ENCODE measurements at regions of chr9 and their contacts with region 1.

Region 1: GRCh38 chr9:114906908-114907571 is 23.4 kb downstream of the TNFSF8 start:
- DNase-seq: no peak
- H3K4me3 ChIP-seq: no peak overlapping the region
- H3K4me3 Mint-ChIP-seq: peak overlapping the region in 7 of 8 donors; percentile 26 to 85 (median 75)
- H3K27ac ChIP-seq: peak overlapping the region; percentile 44
- H3K27ac Mint-ChIP-seq: peak overlapping the region in 6 of 7 donors; percentile 88 to 96 (median 90)
- H3K4me1 ChIP-seq: peaks cover 100% of the 10 kb centered on the region
- H3K4me1 Mint-ChIP-seq: peaks cover 59 to 83% (median 69%) of the 10 kb centered on the region in 4 donors
- H3K27me3 ChIP-seq: no peaks in the 10 kb centered on the region
- H3K27me3 Mint-ChIP-seq: no peaks in the 10 kb centered on the region

Region 2: GRCh38 chr9:114397848-114398605 is 509.0 kb before region 1 on chr9:
- CTCF ChIA-PET with region 1: no interaction called
- POLR2A ChIA-PET with region 1: no interaction called
- intact Hi-C with region 1: loop called (anchors 10 kb)
- DNase-seq: peak; percentile 92 to 96 (median 95)
- H3K4me3 ChIP-seq: peak overlapping the region; percentile 78 to 92
- H3K4me3 Mint-ChIP-seq: peak overlapping the region; percentile 92 to 99 (median 97)
- H3K27ac ChIP-seq: peak overlapping the region; percentile 92
- H3K27ac Mint-ChIP-seq: peak overlapping the region; percentile 93 to 99 (median 97)
- H3K4me1 ChIP-seq: peaks cover 45% of the 10 kb centered on the region
- H3K4me1 Mint-ChIP-seq: peaks cover 28 to 57% (median 43%) of the 10 kb centered on the region in 4 donors
- H3K27me3 ChIP-seq: no peaks in the 10 kb centered on the region
- H3K27me3 Mint-ChIP-seq: no peaks in the 10 kb centered on the region

Region 3: DNA sequence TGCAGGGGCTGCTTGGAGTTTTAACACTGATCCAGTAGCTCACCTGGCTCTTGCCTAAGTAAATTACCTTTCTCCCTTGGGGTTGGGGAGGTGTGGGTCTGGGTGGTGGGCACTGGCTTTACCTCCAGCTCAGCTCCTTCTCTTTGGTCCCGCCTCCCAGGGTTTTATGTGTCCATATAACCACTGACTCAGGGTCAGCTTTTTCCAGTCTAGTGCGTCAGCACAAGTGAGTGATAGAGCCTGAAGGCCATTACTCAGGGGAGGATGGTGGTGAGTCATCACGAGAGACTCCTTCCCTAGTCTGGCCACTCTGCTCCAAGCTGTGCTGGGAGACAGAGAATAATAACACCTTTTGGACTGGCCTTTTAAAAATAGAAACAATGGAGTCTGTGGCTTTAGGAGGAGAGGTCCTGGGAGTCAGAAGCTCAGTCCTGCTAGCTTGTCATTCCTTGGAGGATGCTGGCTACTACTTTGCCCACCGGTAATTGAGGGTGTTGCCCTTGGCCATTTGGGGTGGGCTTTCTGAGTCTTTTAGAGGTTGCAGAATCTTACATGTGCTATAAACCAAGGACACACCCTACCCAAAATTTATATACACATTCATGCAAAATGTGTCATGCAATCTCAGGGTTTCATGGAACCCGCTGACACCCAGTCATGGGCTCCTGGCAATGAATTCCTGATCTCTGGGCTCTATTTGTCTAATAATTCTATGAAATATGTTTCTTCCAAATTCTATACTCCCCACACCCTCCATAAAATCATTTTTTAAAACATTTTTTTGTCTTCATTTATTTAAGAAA is 355.0 kb before region 1 on chr9:
- CTCF ChIA-PET with region 1: no interaction called
- POLR2A ChIA-PET with region 1: no interaction called
- intact Hi-C with region 1: no loop called
- DNase-seq: no peak
- H3K4me3 ChIP-seq: no peak overlapping the region
- H3K4me3 Mint-ChIP-seq: no peak overlapping the region
- H3K27ac ChIP-seq: no peak overlapping the region
- H3K27ac Mint-ChIP-seq: no peak overlapping the region
- H3K4me1 ChIP-seq: no peaks in the 10 kb centered on the region
- H3K4me1 Mint-ChIP-seq: no peaks in the 10 kb centered on the region
- H3K27me3 ChIP-seq: no peaks in the 10 kb centered on the region
- H3K27me3 Mint-ChIP-seq: peaks cover 7 to 9% of the 10 kb centered on the region in 2 donors

Region 4: DNA sequence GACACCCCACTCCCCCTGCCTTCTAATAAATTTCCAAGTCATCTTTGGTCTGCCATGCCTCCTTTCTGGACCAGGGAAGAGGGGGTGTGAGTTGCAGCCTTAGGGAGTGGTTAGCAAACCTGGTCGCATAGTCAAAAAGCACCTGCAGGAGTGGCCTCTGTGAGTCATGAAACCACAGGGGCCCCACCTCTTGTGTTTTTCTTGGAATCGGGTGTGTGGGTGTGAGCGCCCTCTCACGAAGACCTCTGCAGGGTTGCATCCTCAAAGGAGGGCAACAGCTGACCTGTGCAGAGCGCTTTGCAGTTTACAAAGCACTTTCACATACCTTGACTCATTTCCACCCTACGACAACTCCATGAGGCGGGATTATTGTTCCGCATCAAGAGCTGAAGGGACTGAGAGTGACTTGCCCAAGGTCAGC is 188.2 kb before region 1 on chr9:
- CTCF ChIA-PET with region 1: interaction called, 10 read pairs
- POLR2A ChIA-PET with region 1: interaction called, 3 read pairs
- intact Hi-C with region 1: no loop called
- DNase-seq: peak; percentile 65 to 88 (median 77)
- H3K4me3 ChIP-seq: peak overlapping the region in 1 of 2 donors; percentile 15
- H3K4me3 Mint-ChIP-seq: peak overlapping the region in 7 of 8 donors; percentile 53 to 82 (median 61)
- H3K27ac ChIP-seq: peak overlapping the region; percentile 46
- H3K27ac Mint-ChIP-seq: peak overlapping the region; percentile 83 to 95 (median 93)
- H3K4me1 ChIP-seq: peaks cover 47% of the 10 kb centered on the region
- H3K4me1 Mint-ChIP-seq: peaks cover 38 to 57% (median 45%) of the 10 kb centered on the region in 4 donors
- H3K27me3 ChIP-seq: no peaks in the 10 kb centered on the region
- H3K27me3 Mint-ChIP-seq: no peaks in the 10 kb centered on the region

Region 5: DNA sequence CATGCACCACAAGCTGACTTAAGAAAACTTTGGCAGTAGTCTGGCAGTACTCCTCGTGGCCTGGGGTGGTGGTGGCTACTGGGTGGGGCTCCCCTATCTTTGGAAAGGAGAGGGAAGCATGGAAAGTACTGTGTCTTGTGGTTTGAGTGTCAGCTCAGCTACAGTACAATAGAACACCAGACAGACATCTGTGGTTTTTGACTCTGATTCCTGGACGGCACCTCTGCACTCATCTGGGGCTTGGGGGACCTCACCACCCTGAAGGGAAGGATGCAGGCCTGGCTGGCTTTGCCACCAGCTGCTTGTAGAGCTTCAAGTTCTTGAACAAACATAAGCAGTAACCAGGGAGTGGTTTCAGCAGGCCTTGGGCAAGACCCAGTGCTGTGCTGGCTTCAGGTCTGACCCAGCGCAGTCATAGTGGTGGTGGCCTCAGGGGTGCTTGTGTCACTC is 17.2 kb before region 1 on chr9:
- CTCF ChIA-PET with region 1: interaction called, 24 read pairs
- POLR2A ChIA-PET with region 1: interaction called, 14 read pairs
- intact Hi-C with region 1: no loop called
- DNase-seq: no peak
- H3K4me3 ChIP-seq: no peak overlapping the region
- H3K4me3 Mint-ChIP-seq: peak overlapping the region in 5 of 8 donors; percentile 12 to 65 (median 40)
- H3K27ac ChIP-seq: no peak overlapping the region
- H3K27ac Mint-ChIP-seq: peak overlapping the region in 6 of 7 donors; percentile 19 to 82 (median 46)
- H3K4me1 ChIP-seq: peaks cover 49% of the 10 kb centered on the region
- H3K4me1 Mint-ChIP-seq: peaks cover 38 to 65% (median 49%) of the 10 kb centered on the region in 4 donors
- H3K27me3 ChIP-seq: no peaks in the 10 kb centered on the region
- H3K27me3 Mint-ChIP-seq: no peaks in the 10 kb centered on the region

Region 6: GRCh38 chr9:114925039-114925438 is 18.0 kb after region 1 on chr9:
- CTCF ChIA-PET with region 1: interaction called, 90 read pairs
- POLR2A ChIA-PET with region 1: interaction called, 122 read pairs
- intact Hi-C with region 1: no loop called
- DNase-seq: no peak
- H3K4me3 ChIP-seq: peak overlapping the region in 1 of 2 donors; percentile 6
- H3K4me3 Mint-ChIP-seq: peak overlapping the region; percentile 51 to 82 (median 68)
- H3K27ac ChIP-seq: no peak overlapping the region
- H3K27ac Mint-ChIP-seq: peak overlapping the region in 6 of 7 donors; percentile 65 to 81 (median 76)
- H3K4me1 ChIP-seq: peaks cover 73% of the 10 kb centered on the region
- H3K4me1 Mint-ChIP-seq: peaks cover 60 to 93% (median 68%) of the 10 kb centered on the region in 4 donors
- H3K27me3 ChIP-seq: no peaks in the 10 kb centered on the region
- H3K27me3 Mint-ChIP-seq: no peaks in the 10 kb centered on the region

Region 7: GRCh38 chr9:115013998-115014397 is 107.0 kb after region 1 on chr9:
- CTCF ChIA-PET with region 1: interaction called, 69 read pairs
- POLR2A ChIA-PET with region 1: interaction called, 5 read pairs
- intact Hi-C with region 1: loop called (anchors 1 kb)
- DNase-seq: peak; percentile 78 to 79 (median 79)
- H3K4me3 ChIP-seq: no peak overlapping the region
- H3K4me3 Mint-ChIP-seq: no peak overlapping the region
- H3K27ac ChIP-seq: no peak overlapping the region
- H3K27ac Mint-ChIP-seq: peak overlapping the region in 1 of 7 donors; percentile 69
- H3K4me1 ChIP-seq: peaks cover 12% of the 10 kb centered on the region
- H3K4me1 Mint-ChIP-seq: peaks cover 19 to 21% (median 20%) of the 10 kb centered on the region in 4 donors
- H3K27me3 ChIP-seq: no peaks in the 10 kb centered on the region
- H3K27me3 Mint-ChIP-seq: peaks cover 0 to 1% of the 10 kb centered on the region in 2 donors

Measured in CD4-positive, alpha-beta memory T cell (primary cell).